ENCODE measurements at regions of chr1 and their contacts with region 1.

Region 1: GRCh38 chr1:156096640-156097391 is 14.6 kb upstream of the MEX3A start:
- DNase-seq: peak; percentile 88
- H3K4me3 Mint-ChIP-seq: peak overlapping the region; percentile 44
- H3K27ac Mint-ChIP-seq: peak overlapping the region; percentile 72
- H3K4me1 Mint-ChIP-seq: peaks cover 44% of the 10 kb centered on the region
- H3K27me3 Mint-ChIP-seq: peaks cover 20% of the 10 kb centered on the region

Region 2: DNA sequence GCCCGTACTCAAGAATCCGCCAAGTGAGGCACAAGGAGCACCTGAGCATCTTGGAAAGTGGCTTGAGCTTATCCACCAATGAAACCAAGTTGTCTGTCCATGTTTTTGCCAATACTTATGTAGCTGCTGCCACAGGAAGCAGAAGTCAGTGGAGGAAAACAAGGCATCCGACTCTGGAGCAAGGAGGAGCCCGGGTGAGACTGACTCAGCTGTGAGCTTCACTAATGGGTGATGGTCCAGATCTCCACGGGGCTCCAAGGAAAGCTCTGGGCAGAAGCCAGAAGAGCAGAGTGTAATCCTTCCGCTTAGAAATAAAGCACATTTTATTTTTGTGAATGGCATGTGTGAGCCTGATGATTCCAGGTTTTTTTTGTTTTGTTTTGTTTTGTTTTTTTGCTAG is 63.8 kb before region 1 on chr1:
- CTCF ChIA-PET with region 1: no interaction called
- POLR2A ChIA-PET with region 1: no interaction called
- DNase-seq: no peak
- H3K4me3 Mint-ChIP-seq: no peak overlapping the region
- H3K27ac Mint-ChIP-seq: no peak overlapping the region
- H3K4me1 Mint-ChIP-seq: peaks cover 7% of the 10 kb centered on the region
- H3K27me3 Mint-ChIP-seq: no peaks in the 10 kb centered on the region

Region 3: GRCh38 chr1:156114101-156114916 is 17.5 kb after region 1 on chr1 and contains the start of gene LMNA:
- CTCF ChIA-PET with region 1: interaction called, 645 read pairs
- POLR2A ChIA-PET with region 1: no interaction called
- DNase-seq: peak; percentile 63
- H3K4me3 Mint-ChIP-seq: peak within 1 kb of the TSS; percentile 78
- H3K27ac Mint-ChIP-seq: peak within 1 kb of the TSS; percentile 68
- H3K4me1 Mint-ChIP-seq: peaks cover 32% of the 10 kb centered on the region
- H3K27me3 Mint-ChIP-seq: peaks cover 43% of the 10 kb centered on the region
- total RNA-seq, gene LMNA: 38.3 to 43.5 TPM

Region 4: GRCh38 chr1:156129706-156130581 is 33.1 kb after region 1 on chr1:
- CTCF ChIA-PET with region 1: interaction called, 645 read pairs
- POLR2A ChIA-PET with region 1: interaction called, 11 read pairs
- DNase-seq: peak; percentile 82
- H3K4me3 Mint-ChIP-seq: no peak overlapping the region
- H3K27ac Mint-ChIP-seq: peak overlapping the region; percentile 46
- H3K4me1 Mint-ChIP-seq: peaks cover 52% of the 10 kb centered on the region
- H3K27me3 Mint-ChIP-seq: no peaks in the 10 kb centered on the region

Region 5: DNA sequence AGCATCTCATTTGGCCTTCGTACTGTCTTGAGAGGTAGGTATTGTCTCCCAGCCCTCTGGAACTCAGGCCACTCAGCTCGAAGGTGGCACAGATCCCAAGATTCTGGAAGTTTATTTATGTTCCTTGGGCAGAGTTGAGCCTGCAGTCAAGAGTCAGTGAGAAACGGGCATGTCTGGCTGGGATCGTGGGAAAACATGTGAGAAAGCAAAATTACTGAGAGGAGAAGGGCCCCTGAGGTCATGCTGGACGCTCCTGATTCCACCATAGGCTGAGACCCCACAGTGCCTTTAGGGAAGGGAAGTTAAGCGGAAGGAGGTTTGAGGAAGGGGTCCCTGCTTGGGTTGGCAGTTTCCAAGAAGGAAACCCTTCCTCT is 44.0 kb after region 1 on chr1:
- CTCF ChIA-PET with region 1: interaction called, 645 read pairs
- POLR2A ChIA-PET with region 1: no interaction called
- DNase-seq: no peak
- H3K4me3 Mint-ChIP-seq: no peak overlapping the region
- H3K27ac Mint-ChIP-seq: no peak overlapping the region
- H3K4me1 Mint-ChIP-seq: peaks cover 8% of the 10 kb centered on the region
- H3K27me3 Mint-ChIP-seq: no peaks in the 10 kb centered on the region